ENCODE measurements at regions of chr5 and their contacts with region 1.

Region 1: DNA sequence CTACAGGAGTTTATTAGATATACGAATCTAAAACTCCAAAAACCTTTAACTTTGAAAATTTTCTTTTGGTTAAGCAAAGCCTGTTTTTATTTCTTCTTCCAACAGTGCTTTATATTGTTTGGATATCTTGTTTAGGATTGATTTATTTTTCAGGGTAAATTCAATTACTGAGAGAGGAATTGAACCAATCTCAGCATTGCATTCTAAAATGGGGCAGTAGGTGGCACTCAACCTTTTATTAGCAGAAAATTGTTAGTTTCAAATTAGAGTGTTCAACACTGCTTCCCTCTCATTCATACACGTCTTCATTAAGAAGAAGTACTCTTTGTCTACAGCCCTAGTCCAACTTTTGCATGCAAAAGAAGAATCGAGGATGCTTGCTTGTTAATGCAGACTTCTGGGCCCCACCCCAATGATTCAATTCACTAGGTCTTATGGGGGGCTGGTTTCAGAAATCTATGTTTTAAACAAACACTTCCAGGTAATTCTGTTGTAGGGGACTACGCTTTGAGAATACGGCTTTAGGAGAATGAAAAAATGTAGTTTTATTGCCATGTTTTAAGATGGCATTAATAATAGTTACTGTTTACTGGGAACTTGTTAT is 26.6 kb downstream of the MRPL22 start:
- DNase-seq: peak; percentile 38
- H3K4me3 Mint-ChIP-seq: no peak overlapping the region
- H3K27ac Mint-ChIP-seq: no peak overlapping the region
- H3K4me1 Mint-ChIP-seq: no peaks in the 10 kb centered on the region
- H3K27me3 Mint-ChIP-seq: no peaks in the 10 kb centered on the region
- CTCF ChIP-seq: peak; percentile 55

Region 2: GRCh38 chr5:154385236-154385512 is 582.3 kb before region 1 on chr5:
- CTCF ChIA-PET with region 1: no interaction called
- POLR2A ChIA-PET with region 1: no interaction called
- intact Hi-C with region 1: no loop called
- DNase-seq: no peak
- H3K4me3 Mint-ChIP-seq: no peak overlapping the region
- H3K27ac Mint-ChIP-seq: no peak overlapping the region
- H3K4me1 Mint-ChIP-seq: no peaks in the 10 kb centered on the region
- H3K27me3 Mint-ChIP-seq: no peaks in the 10 kb centered on the region
- CTCF ChIP-seq: no peak

Region 3: DNA sequence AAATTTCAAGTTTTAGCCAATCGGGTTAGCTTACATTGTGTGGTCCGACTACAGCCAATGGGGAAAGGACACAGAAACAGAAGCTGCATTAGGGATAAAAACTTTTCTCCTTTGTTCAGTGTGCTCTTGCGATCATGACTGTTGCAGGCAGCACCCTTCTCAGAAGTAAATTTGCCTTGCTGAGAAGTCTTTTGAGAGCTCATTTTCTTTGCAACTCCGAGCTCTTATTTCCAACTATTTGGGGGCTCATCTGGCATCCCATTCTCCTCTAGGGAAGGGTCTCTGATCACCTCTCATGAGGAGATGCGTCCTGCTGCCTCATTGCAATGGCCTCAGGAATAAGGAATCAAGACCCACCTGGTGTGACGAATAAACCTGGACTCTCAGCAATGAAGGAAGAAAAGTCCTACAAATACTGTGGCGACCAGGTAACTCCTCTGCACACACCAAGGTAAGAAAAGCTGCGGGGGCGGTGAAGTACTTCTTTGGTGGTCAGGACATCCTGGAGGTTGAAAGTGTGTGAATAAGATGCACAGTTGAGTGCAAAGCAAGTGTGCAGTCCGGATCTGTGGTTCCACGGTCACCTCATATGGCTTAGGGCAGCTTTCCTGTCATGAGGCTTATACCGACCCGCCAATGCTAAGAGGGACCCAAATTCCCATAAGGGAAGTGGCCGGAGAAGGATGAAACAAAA is 88.7 kb before region 1 on chr5:
- CTCF ChIA-PET with region 1: no interaction called
- POLR2A ChIA-PET with region 1: no interaction called
- intact Hi-C with region 1: no loop called
- DNase-seq: peak; percentile 8
- H3K4me3 Mint-ChIP-seq: no peak overlapping the region
- H3K27ac Mint-ChIP-seq: no peak overlapping the region
- H3K4me1 Mint-ChIP-seq: no peaks in the 10 kb centered on the region
- H3K27me3 Mint-ChIP-seq: no peaks in the 10 kb centered on the region
- CTCF ChIP-seq: no peak

Region 4: DNA sequence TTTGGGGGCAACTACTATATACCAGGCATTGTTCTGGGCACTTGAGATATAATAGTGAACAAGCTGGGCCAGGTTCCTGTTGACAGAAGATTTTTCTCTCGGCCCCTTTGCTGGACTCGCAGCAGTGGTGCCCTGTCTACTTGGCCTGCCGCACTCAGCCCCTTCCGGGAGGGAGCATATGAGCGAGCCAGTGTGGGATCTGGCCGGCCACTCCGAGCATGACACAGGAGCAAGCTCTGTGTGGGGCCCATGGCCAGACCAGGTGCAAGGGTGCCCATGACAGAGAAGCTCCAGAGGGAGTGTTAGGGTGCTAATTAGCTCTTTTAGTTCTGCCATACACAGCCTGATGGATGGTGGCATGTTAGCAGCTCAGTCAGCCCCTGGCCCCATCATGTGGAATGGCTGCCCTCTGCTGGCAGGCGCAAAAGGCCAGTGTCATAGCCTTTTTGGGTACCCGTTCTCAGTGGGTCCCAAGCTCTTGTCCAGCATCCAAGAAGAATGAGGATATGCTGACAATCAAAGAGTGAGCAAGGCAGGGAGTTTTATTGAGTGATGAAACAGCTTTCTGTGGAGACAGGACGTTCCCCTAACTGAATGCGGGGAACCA is 36.7 kb after region 1 on chr5:
- CTCF ChIA-PET with region 1: interaction called, 33 read pairs
- POLR2A ChIA-PET with region 1: no interaction called
- intact Hi-C with region 1: loop called (anchors 1 kb)
- DNase-seq: peak; percentile 61
- H3K4me3 Mint-ChIP-seq: no peak overlapping the region
- H3K27ac Mint-ChIP-seq: no peak overlapping the region
- H3K4me1 Mint-ChIP-seq: peaks cover 9% of the 10 kb centered on the region
- H3K27me3 Mint-ChIP-seq: no peaks in the 10 kb centered on the region
- CTCF ChIP-seq: peak; percentile 37

Region 5: GRCh38 chr5:155878991-155879575 is 911.6 kb after region 1 on chr5:
- CTCF ChIA-PET with region 1: no interaction called
- POLR2A ChIA-PET with region 1: no interaction called
- intact Hi-C with region 1: no loop called
- DNase-seq: no peak
- H3K4me3 Mint-ChIP-seq: no peak overlapping the region
- H3K27ac Mint-ChIP-seq: no peak overlapping the region
- H3K4me1 Mint-ChIP-seq: no peaks in the 10 kb centered on the region
- H3K27me3 Mint-ChIP-seq: no peaks in the 10 kb centered on the region
- CTCF ChIP-seq: no peak

Region 6: GRCh38 chr5:156103155-156103885 is 1135.8 kb after region 1 on chr5:
- CTCF ChIA-PET with region 1: no interaction called
- POLR2A ChIA-PET with region 1: no interaction called
- intact Hi-C with region 1: no loop called
- DNase-seq: no peak
- H3K4me3 Mint-ChIP-seq: no peak overlapping the region
- H3K27ac Mint-ChIP-seq: no peak overlapping the region
- H3K4me1 Mint-ChIP-seq: no peaks in the 10 kb centered on the region
- H3K27me3 Mint-ChIP-seq: no peaks in the 10 kb centered on the region
- CTCF ChIP-seq: no peak